Common myeloid progenitor, CD34-positive (primary cell): ENCODE measurements at regions of chr6 and their contacts with region 1.

Region 1: DNA sequence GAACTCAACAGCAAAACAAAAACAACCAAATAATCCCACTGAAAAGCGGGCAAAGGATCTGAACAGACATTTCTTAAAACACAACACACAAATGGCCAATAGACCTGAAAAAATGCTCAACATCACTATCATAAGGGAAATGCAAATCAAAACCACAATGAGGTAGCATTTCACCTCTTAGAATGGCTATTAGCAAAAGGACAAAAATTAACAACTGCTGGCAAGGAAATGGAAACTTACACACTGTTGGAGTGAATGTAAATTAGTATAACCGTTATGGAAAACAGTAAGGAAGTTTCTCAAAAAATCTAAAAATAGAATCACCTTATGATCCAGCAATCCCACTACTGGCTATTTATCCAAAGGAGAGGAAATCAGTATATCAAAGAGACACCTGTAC is 20.9 kb downstream of the FAM8A1 start:
- DNase-seq: peak; percentile 18 to 73 (median 58)
- H3K4me3 ChIP-seq: peak overlapping the region in 1 of 7 experiments; percentile 5
- H3K27ac ChIP-seq: peak overlapping the region; percentile 1 to 19
- H3K4me1 ChIP-seq: peaks cover 7 to 14% (median 11%) of the 10 kb centered on the region in 4 experiments
- H3K27me3 ChIP-seq: no peaks in the 10 kb centered on the region

Region 2: GRCh38 chr6:17599885-17600526 is 21.0 kb before region 1 on chr6 and contains the start of gene FAM8A1:
- CTCF ChIA-PET with region 1: interaction called, 17 read pairs
- POLR2A ChIA-PET with region 1: no interaction called
- DNase-seq: peak; percentile 92 to 97 (median 97)
- H3K4me3 ChIP-seq: peak within 1 kb of the TSS; percentile 57 to 88 (median 80)
- H3K27ac ChIP-seq: peak within 1 kb of the TSS; percentile 74 to 87
- H3K4me1 ChIP-seq: peaks cover 9 to 24% (median 18%) of the 10 kb centered on the region in 4 experiments
- H3K27me3 ChIP-seq: no peaks in the 10 kb centered on the region

Region 3: GRCh38 chr6:17790489-17790888 is 169.5 kb after region 1 on chr6:
- CTCF ChIA-PET with region 1: no interaction called
- POLR2A ChIA-PET with region 1: no interaction called
- DNase-seq: no peak
- H3K4me3 ChIP-seq: no peak overlapping the region
- H3K27ac ChIP-seq: no peak overlapping the region
- H3K4me1 ChIP-seq: no peaks in the 10 kb centered on the region
- H3K27me3 ChIP-seq: no peaks in the 10 kb centered on the region